ENCODE measurements at regions of chr18 and their contacts with region 1.

Region 1: DNA sequence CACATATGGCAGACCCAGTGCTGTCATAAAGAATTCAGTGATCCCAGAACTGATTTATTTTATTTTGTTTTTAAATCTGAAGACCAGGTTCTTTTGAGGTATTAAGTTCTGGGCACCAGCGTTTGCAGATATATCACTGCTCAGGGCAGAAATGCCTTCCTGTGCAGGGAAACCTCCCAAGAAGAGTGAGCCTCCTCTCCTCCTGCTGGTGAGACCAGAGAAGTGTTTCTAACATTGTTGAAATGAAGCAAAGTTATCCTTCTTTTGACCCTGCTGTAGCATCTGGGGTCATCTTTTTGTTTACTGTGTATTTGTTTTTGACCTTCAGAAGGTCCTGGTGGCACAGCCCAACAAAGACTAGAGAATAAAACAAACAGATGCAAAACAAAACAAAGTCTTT is 94.0 kb downstream of the AQP4 start:
- DNase-seq: no peak
- H3K4me3 ChIP-seq: no peak overlapping the region
- H3K27ac ChIP-seq: no peak overlapping the region
- H3K27me3 ChIP-seq: no peaks in the 10 kb centered on the region
- CTCF ChIP-seq: no peak

Region 2: GRCh38 chr18:27581296-27581904 is 809.9 kb after region 1 on chr18:
- CTCF ChIA-PET with region 1: no interaction called
- POLR2A ChIA-PET with region 1: interaction called, 11 read pairs
- DNase-seq: no peak
- H3K4me3 ChIP-seq: no peak overlapping the region
- H3K27ac ChIP-seq: no peak overlapping the region
- H3K27me3 ChIP-seq: no peaks in the 10 kb centered on the region
- CTCF ChIP-seq: no peak